ENCODE measurements at regions of chr10 and their contacts with region 1.

Region 1: DNA sequence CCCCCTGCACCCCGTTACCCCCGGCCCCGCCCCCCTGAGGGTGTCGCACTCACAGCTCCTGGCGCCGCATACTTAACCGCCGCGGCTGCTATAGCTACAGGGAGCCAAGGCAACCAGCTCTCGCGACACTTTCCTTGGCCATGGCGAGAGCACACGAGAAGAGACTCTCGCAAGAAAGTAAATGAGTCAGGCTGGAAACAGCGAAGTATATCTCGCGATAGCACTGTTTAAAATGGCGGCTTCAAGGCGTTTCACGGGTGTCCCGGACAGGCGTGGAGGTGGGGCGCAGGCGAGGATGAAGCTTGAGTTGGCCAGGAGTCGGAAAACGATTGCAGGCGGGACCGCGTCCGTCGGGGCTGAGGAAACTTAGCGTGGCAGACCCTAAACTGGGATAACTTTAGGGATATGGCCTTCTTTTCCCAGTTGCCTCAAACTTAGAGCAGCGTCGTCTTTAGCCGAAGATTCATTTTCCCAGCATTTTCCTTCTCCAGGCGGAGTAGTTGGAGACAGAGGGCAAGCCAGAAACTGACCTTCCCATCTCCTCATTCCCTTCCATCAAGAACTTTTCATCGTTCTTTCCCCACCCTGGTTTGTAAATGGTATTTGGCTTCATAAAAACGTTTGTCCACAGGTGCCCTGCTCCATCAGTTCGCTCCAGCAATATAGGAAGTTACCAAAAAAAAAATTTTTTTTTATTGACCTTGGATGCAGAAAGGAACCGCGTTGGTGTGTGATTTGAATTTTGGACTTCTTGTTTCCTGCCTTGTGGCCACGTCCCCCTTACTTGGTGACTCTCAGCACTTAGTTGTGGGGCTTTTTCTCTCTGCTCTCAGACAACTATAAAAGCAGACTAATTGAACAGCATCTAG is 15.2 kb downstream of the MYOZ1 start:
- DNase-seq: peak; percentile 84 to 99 (median 92)
- ATAC-seq: peak; percentile 90
- H3K4me3 ChIP-seq: peak overlapping the region; percentile 78 to 90
- H3K4me3 Mint-ChIP-seq: peak overlapping the region; percentile 95
- H3K27ac ChIP-seq: peak overlapping the region; percentile 84 to 86
- H3K27ac Mint-ChIP-seq: peak overlapping the region; percentile 98
- H3K4me1 ChIP-seq: peaks cover 16% of the 10 kb centered on the region
- H3K4me1 Mint-ChIP-seq: peaks cover 21% of the 10 kb centered on the region
- H3K27me3 ChIP-seq: no peaks in the 10 kb centered on the region
- H3K27me3 Mint-ChIP-seq: no peaks in the 10 kb centered on the region
- CTCF ChIP-seq: no peak

Region 2: GRCh38 chr10:73246783-73247508 is 379.2 kb before region 1 on chr10 and contains the start of gene DNAJC9:
- CTCF ChIA-PET with region 1: no interaction called
- POLR2A ChIA-PET with region 1: no interaction called
- intact Hi-C with region 1: loop called (anchors 2 kb)
- DNase-seq: peak; percentile 95 to 98 (median 97)
- ATAC-seq: peak; percentile 88
- H3K4me3 ChIP-seq: peak within 1 kb of the TSS; percentile 88 to 95
- H3K4me3 Mint-ChIP-seq: peak within 1 kb of the TSS; percentile 96
- H3K27ac ChIP-seq: peak within 1 kb of the TSS; percentile 85 to 89
- H3K27ac Mint-ChIP-seq: peak within 1 kb of the TSS; percentile 97
- H3K4me1 ChIP-seq: peaks cover 34% of the 10 kb centered on the region
- H3K4me1 Mint-ChIP-seq: peaks cover 59% of the 10 kb centered on the region
- H3K27me3 ChIP-seq: no peaks in the 10 kb centered on the region
- H3K27me3 Mint-ChIP-seq: no peaks in the 10 kb centered on the region
- CTCF ChIP-seq: peak; percentile 19
- total RNA-seq, gene DNAJC9: 17.6 to 18.4 TPM

Region 3: GRCh38 chr10:73358331-73359279 is 267.5 kb before region 1 on chr10 and contains the start of gene CFAP70:
- CTCF ChIA-PET with region 1: no interaction called
- POLR2A ChIA-PET with region 1: no interaction called
- intact Hi-C with region 1: loop called in 1 of 2 experiments (anchors 5 kb)
- DNase-seq: peak; percentile 83 to 98 (median 90)
- ATAC-seq: peak; percentile 96
- H3K4me3 ChIP-seq: peak within 1 kb of the TSS; percentile 71 to 75
- H3K4me3 Mint-ChIP-seq: peak within 1 kb of the TSS; percentile 98
- H3K27ac ChIP-seq: peak within 1 kb of the TSS; percentile 78 to 88
- H3K27ac Mint-ChIP-seq: peak within 1 kb of the TSS; percentile 96
- H3K4me1 ChIP-seq: peaks cover 5% of the 10 kb centered on the region
- H3K4me1 Mint-ChIP-seq: peaks cover 16% of the 10 kb centered on the region
- H3K27me3 ChIP-seq: peaks cover 0 to 8% of the 10 kb centered on the region in 2 experiments
- H3K27me3 Mint-ChIP-seq: peaks cover 2% of the 10 kb centered on the region
- CTCF ChIP-seq: no peak
- total RNA-seq, gene CFAP70: 2.4 to 2.8 TPM

Region 4: DNA sequence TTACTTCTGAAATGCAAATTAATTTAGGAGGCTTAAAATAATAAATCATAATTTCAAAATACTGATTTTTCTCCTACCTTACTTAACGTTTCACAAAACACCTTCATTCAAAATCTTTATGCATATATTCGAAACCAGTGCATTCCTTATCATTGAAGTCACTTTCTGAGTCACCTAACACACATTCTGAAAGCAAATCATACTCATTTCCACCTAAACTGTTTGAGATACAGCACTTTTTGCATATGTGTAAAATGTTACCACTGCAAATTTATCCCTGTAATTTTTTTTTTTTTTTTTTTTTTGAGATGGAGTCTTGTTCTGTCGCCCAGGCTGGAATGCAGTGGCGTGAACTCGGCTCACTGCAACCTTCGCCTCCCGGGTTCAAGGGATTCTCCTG is 146.0 kb before region 1 on chr10:
- CTCF ChIA-PET with region 1: no interaction called
- POLR2A ChIA-PET with region 1: no interaction called
- intact Hi-C with region 1: loop called in 1 of 2 experiments (anchors 5 kb)
- DNase-seq: no peak
- ATAC-seq: no peak
- H3K4me3 ChIP-seq: no peak overlapping the region
- H3K4me3 Mint-ChIP-seq: no peak overlapping the region
- H3K27ac ChIP-seq: no peak overlapping the region
- H3K27ac Mint-ChIP-seq: no peak overlapping the region
- H3K4me1 ChIP-seq: no peaks in the 10 kb centered on the region
- H3K4me1 Mint-ChIP-seq: peaks cover 22% of the 10 kb centered on the region
- H3K27me3 ChIP-seq: no peaks in the 10 kb centered on the region
- H3K27me3 Mint-ChIP-seq: no peaks in the 10 kb centered on the region
- CTCF ChIP-seq: no peak

Region 5: DNA sequence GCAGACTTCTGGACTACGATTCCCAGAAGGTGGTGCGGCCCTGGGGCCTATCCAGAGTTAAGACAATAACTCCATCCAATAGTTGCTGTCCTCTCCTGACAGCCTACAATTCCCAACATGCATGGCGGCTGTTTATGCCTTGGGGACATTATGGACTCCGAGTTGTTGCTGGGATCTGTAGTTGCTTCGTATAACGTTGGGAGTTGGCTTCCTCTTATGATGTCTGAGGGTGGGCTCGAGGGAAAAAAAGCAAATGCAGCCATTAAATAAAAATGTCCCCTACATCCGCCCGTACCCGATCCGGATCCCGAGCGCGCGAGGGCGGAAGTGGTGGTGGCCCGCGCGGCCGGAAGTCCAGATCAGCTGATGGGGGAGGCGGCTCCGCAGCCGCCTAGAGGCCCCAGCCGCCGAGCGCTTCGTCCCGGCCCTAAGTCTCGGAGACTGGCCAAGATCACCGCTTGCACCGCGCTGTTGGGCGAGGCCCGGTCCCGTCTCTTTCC is 159.2 kb after region 1 on chr10 and contains the start of gene ZSWIM8:
- CTCF ChIA-PET with region 1: no interaction called
- POLR2A ChIA-PET with region 1: no interaction called
- intact Hi-C with region 1: loop called in 1 of 2 experiments (anchors 2 kb)
- DNase-seq: peak; percentile 70 to 96 (median 85)
- ATAC-seq: peak; percentile 84
- H3K4me3 ChIP-seq: peak within 1 kb of the TSS; percentile 68 to 81
- H3K4me3 Mint-ChIP-seq: peak within 1 kb of the TSS; percentile 99
- H3K27ac ChIP-seq: peak within 1 kb of the TSS; percentile 62 to 82
- H3K27ac Mint-ChIP-seq: peak within 1 kb of the TSS; percentile 95
- H3K4me1 ChIP-seq: peaks cover 41% of the 10 kb centered on the region
- H3K4me1 Mint-ChIP-seq: peaks cover 52% of the 10 kb centered on the region
- H3K27me3 ChIP-seq: no peaks in the 10 kb centered on the region
- H3K27me3 Mint-ChIP-seq: no peaks in the 10 kb centered on the region
- CTCF ChIP-seq: no peak
- total RNA-seq, gene ZSWIM8: 68.2 to 72.4 TPM

Measured in CD8-positive, alpha-beta T cell (primary cell).